Activated naive CD4-positive, alpha-beta T cell treated with anti-CD3 and anti-CD28 coated beads for 36 hours (primary cell): ENCODE measurements at regions of chr4 and their contacts with region 1.

Region 1: DNA sequence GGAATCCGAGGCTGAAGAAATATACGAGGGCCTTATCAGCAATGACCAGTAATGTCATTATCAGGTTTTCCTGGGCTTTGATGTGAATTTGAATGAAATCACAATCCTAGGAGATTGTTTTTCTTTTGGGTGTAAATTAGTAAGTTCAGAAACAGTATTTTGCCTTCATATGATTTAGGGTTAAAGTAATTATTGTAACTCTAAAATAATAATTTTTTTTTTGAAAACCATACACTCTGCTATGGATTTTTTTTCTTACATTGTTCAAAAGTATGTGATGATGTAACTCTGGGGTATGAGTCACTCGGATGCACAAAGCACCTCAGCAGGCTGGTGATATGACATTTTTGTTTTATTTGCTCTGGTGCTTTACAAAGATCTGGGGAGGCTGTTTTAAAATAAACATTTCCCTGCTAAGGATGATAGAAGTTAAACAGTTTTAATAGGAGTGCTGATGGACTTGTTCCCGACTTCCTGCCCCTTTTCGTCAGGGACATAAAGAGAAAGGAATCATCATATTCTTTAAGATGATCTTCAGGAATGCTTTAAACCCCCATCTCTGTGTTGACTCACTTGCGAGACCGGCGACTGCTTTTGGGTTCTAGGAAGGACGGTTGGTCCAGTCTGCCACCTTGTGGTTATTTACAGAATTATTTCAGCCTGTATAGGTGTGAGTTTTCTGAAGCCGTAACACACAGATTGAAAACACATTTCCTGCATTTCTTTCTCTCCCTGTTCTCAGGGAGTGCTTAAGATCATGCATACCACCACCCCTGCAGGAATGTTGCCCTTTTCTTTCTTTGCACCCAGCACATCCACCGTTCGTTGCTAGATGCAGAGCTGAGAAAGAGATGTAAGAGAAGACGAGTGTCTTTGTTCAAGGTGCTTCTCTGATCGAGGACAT is 72.5 kb downstream of the RAPGEF2 start:
- DNase-seq: peak; percentile 76
- H3K4me3 Mint-ChIP-seq: peak overlapping the region; percentile 44
- H3K27ac Mint-ChIP-seq: no peak overlapping the region
- H3K4me1 Mint-ChIP-seq: peaks cover 75% of the 10 kb centered on the region
- H3K27me3 Mint-ChIP-seq: peaks cover 3% of the 10 kb centered on the region

Region 2: DNA sequence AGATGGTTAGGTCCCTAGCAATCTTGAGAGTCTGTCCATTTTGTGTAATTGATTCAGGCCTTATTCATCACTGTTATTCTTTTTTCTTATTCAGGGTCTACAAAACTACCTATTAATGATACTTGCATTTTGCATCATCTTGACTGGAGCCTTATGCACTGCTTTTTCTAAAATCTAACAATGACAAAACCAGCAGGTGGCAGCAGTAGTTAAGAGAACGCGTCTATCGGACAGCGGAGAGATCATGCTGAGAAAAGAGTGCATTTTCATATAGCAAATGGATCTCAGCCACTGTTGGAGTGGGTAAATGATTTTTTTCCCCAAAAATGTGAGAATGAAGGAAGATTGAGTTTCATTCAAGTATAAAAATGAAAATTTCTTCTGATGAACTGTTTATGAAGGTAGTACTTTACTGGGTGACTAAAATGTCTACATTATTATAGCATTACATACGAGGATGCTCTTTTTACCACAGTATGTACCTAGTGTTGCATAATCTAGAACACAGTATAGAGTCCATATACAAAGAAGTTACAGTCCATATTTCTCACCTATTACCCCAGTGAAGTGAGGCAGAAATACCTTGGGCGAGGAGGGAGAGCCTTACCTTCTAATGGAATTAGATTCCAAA is 921.9 kb before region 1 on chr4:
- CTCF ChIA-PET with region 1: no interaction called
- intact Hi-C with region 1: loop called (anchors 10 kb)
- DNase-seq: peak; percentile 76
- H3K4me3 Mint-ChIP-seq: no peak overlapping the region
- H3K27ac Mint-ChIP-seq: no peak overlapping the region
- H3K4me1 Mint-ChIP-seq: peaks cover 7% of the 10 kb centered on the region
- H3K27me3 Mint-ChIP-seq: peaks cover 18% of the 10 kb centered on the region

Region 3: GRCh38 chr4:158729716-158730559 is 445.4 kb before region 1 on chr4:
- CTCF ChIA-PET with region 1: no interaction called
- intact Hi-C with region 1: loop called (anchors 1 kb)
- DNase-seq: peak; percentile 73
- H3K4me3 Mint-ChIP-seq: no peak overlapping the region
- H3K27ac Mint-ChIP-seq: no peak overlapping the region
- H3K4me1 Mint-ChIP-seq: peaks cover 4% of the 10 kb centered on the region
- H3K27me3 Mint-ChIP-seq: peaks cover 26% of the 10 kb centered on the region

Region 4: GRCh38 chr4:158895797-158896576 is 279.4 kb before region 1 on chr4:
- CTCF ChIA-PET with region 1: no interaction called
- intact Hi-C with region 1: loop called (anchors 1 kb)
- DNase-seq: no peak
- H3K4me3 Mint-ChIP-seq: no peak overlapping the region
- H3K27ac Mint-ChIP-seq: no peak overlapping the region
- H3K4me1 Mint-ChIP-seq: peaks cover 2% of the 10 kb centered on the region
- H3K27me3 Mint-ChIP-seq: no peaks in the 10 kb centered on the region

Region 5: GRCh38 chr4:159446266-159446976 is 271.1 kb after region 1 on chr4:
- CTCF ChIA-PET with region 1: no interaction called
- intact Hi-C with region 1: loop called (anchors 1 kb)
- DNase-seq: peak; percentile 42
- H3K4me3 Mint-ChIP-seq: no peak overlapping the region
- H3K27ac Mint-ChIP-seq: no peak overlapping the region
- H3K4me1 Mint-ChIP-seq: no peaks in the 10 kb centered on the region
- H3K27me3 Mint-ChIP-seq: peaks cover 17% of the 10 kb centered on the region